HEK293 (cell line): ENCODE measurements at regions of chr19 and their contacts with region 1.

Region 1: DNA sequence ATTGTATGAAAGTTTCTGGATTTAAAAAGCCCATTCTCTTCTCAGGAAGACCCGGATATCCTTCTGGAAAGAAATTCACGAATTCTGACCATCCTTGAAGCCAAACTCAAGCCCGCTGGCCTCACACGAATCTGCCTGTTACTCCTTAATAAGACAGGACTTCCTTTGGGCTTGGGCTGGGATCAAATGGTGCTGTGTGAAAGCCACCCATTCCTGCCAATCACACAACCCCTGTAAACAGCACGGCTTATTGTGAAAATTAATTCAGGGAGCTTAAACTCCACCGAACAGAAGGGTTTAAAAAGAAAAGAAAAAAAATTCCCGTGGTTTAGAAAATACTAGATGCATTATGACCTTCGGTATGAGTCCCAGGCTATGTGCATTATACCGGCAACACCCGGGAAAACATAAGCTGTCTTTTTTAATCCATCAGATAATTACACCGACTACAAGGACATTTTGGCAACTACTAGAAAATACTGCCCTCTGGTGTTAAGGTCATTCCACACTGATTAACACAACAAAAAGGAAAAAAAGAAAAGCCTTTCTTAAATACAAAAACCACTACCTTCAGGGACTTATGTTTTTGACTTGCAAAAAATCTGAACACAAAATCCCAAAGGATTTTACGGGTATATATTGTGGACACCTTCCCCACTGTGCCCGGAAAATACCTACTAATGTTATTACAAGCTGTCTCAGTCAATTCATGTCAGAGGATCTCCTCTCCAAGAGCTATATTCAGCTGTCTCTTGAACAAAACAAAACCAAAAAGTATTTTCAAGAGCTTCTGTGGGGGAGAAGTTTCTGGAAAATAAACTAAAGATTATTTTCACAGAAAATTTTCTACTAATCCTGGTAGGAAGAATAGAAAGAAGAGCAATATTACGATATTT is 76.0 kb upstream of the LSM14A start:
- H3K4me3 ChIP-seq: no peak overlapping the region
- H3K27ac ChIP-seq: no peak overlapping the region
- H3K4me1 ChIP-seq: peaks cover 9% of the 10 kb centered on the region
- CTCF ChIP-seq: peak; percentile 84

Region 2: GRCh38 chr19:33778089-33778791 is 318.0 kb before region 1 on chr19:
- CTCF ChIA-PET with region 1: interaction called, 341 read pairs
- POLR2A ChIA-PET with region 1: interaction called, 16 read pairs
- H3K4me3 ChIP-seq: no peak overlapping the region
- H3K27ac ChIP-seq: no peak overlapping the region
- H3K4me1 ChIP-seq: peaks cover 4% of the 10 kb centered on the region
- CTCF ChIP-seq: peak; percentile 100

Region 3: GRCh38 chr19:33883859-33884519 is 212.3 kb before region 1 on chr19:
- CTCF ChIA-PET with region 1: interaction called, 14 read pairs
- POLR2A ChIA-PET with region 1: no interaction called
- H3K4me3 ChIP-seq: no peak overlapping the region
- H3K27ac ChIP-seq: peak overlapping the region; percentile 57; the same call in 1 of the 2 replicates
- H3K4me1 ChIP-seq: peaks cover 11% of the 10 kb centered on the region
- CTCF ChIP-seq: no peak

Region 4: DNA sequence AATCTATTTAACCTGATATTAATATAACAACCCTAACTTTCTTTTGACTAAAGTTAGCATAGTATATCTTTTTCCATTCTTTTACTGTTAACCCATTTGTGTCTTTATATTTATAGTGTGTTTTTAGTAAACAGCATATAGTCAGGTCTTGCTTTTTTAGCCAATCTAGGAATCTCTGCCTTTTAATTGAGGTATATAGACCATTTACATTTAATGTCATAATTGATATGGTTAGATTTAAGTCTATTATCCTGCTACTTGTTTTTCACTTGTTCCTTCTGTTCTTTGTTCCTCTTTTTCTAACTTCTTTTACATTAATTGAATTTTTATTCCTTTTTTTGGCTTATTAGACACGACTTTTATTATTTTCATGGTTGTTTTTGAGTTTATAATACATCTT is 125.2 kb before region 1 on chr19:
- CTCF ChIA-PET with region 1: interaction called, 11 read pairs
- POLR2A ChIA-PET with region 1: no interaction called
- H3K4me3 ChIP-seq: no peak overlapping the region
- H3K27ac ChIP-seq: no peak overlapping the region
- H3K4me1 ChIP-seq: no peaks in the 10 kb centered on the region
- CTCF ChIP-seq: no peak

Region 5: DNA sequence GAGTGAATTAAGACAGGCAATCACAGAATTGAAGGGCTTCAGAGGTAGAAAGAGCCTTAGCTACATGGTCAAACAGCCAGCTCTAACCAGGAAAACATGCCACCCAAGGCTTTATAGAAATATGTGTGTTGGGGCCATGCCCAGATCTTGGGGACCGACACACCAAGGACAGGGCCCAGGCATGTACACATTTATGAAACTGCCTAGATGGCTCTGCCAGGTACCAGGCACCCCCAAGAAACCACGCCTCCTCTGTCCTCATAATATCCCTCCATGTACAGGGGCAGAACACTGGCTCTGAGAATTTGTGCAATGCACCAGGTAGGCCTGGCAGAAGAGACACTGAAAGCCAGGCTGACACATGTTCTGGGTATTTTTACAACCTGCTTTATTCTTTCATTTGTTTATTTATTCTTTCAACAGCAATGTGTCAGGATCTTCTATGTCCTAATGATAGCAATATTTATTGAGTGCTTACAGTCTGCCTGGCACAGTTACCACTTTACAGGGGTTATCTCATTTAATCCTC is 61.9 kb before region 1 on chr19:
- CTCF ChIA-PET with region 1: interaction called, 15 read pairs
- POLR2A ChIA-PET with region 1: no interaction called
- H3K4me3 ChIP-seq: no peak overlapping the region
- H3K27ac ChIP-seq: no peak overlapping the region
- H3K4me1 ChIP-seq: no peaks in the 10 kb centered on the region
- CTCF ChIP-seq: no peak

Region 6: GRCh38 chr19:34075661-34076091 is 20.6 kb before region 1 on chr19:
- CTCF ChIA-PET with region 1: interaction called, 46 read pairs
- POLR2A ChIA-PET with region 1: no interaction called
- H3K4me3 ChIP-seq: no peak overlapping the region
- H3K27ac ChIP-seq: no peak overlapping the region
- H3K4me1 ChIP-seq: no peaks in the 10 kb centered on the region
- CTCF ChIP-seq: no peak

Region 7: DNA sequence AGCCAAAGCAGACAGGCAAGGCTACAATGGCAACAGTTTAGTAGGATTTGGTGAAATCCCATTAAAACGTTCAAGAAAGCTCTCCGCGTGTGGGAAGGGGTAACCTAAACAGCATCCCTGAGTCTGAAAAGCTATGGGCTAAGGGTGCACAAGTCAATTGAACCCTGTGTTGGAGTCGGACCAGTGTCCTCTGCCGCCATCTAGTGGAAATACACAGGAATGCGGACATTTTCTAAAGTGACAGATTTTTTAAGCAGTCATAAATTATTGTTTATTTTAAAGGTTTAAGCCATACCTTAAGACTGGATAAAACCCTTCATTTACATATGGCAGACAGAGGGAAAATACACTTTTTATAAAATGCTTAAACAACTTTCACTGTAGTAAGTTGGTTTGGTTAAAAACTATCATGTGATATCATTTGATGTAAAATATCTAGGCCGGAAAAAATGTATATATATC is 49.5 kb after region 1 on chr19:
- CTCF ChIA-PET with region 1: interaction called, 110 read pairs
- POLR2A ChIA-PET with region 1: no interaction called
- H3K4me3 ChIP-seq: no peak overlapping the region
- H3K27ac ChIP-seq: no peak overlapping the region
- H3K4me1 ChIP-seq: peaks cover 3% of the 10 kb centered on the region; the same call in 1 of the 2 replicates
- CTCF ChIP-seq: peak; percentile 93